ENCODE measurements at regions of chr1 and their contacts with region 1.

Region 1: GRCh38 chr1:168509875-168510791 is 33.7 kb downstream of the XCL2 start:
- DNase-seq: peak; percentile 84
- ATAC-seq: peak; percentile 71
- H3K4me3 Mint-ChIP-seq: peak overlapping the region; percentile 32
- H3K27ac Mint-ChIP-seq: peak overlapping the region; percentile 97
- H3K4me1 Mint-ChIP-seq: peaks cover 88% of the 10 kb centered on the region
- H3K27me3 Mint-ChIP-seq: no peaks in the 10 kb centered on the region
- CTCF ChIP-seq: no peak

Region 2: DNA sequence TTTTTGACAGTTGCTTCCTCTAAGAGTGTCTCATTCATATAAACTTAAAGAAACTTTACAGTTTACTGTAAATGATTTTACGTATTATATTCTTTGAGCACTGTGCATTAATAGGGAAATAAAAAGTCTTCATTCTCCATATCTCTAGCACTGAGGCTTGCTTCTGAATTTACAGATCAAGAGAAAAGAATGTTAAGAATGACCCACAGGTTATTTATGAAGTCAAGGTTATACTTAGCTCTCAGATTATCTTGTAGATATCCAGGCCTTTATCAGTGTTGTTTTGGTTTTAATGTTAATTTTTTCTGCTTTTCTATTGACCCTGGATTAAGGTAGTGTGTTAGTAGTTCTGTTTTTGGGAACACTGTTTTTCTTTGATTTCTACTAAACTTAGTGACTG is 464.8 kb before region 1 on chr1:
- CTCF ChIA-PET with region 1: no interaction called
- POLR2A ChIA-PET with region 1: no interaction called
- intact Hi-C with region 1: no loop called
- DNase-seq: no peak
- ATAC-seq: no peak
- H3K4me3 Mint-ChIP-seq: no peak overlapping the region
- H3K27ac Mint-ChIP-seq: no peak overlapping the region
- H3K4me1 Mint-ChIP-seq: no peaks in the 10 kb centered on the region
- H3K27me3 Mint-ChIP-seq: no peaks in the 10 kb centered on the region
- CTCF ChIP-seq: no peak

Region 3: GRCh38 chr1:168466092-168466713 is 43.9 kb before region 1 on chr1:
- CTCF ChIA-PET with region 1: no interaction called
- POLR2A ChIA-PET with region 1: interaction called, 5 read pairs
- intact Hi-C with region 1: loop called (anchors 5 kb)
- DNase-seq: peak; percentile 86
- ATAC-seq: peak; percentile 86
- H3K4me3 Mint-ChIP-seq: peak overlapping the region; percentile 22
- H3K27ac Mint-ChIP-seq: peak overlapping the region; percentile 91
- H3K4me1 Mint-ChIP-seq: peaks cover 57% of the 10 kb centered on the region
- H3K27me3 Mint-ChIP-seq: no peaks in the 10 kb centered on the region
- CTCF ChIP-seq: no peak

Region 4: GRCh38 chr1:168553680-168554553 is 43.8 kb after region 1 on chr1:
- CTCF ChIA-PET with region 1: interaction called, 3 read pairs
- POLR2A ChIA-PET with region 1: interaction called, 4 read pairs
- intact Hi-C with region 1: loop called (anchors 5 kb)
- DNase-seq: peak; percentile 75
- ATAC-seq: peak; percentile 68
- H3K4me3 Mint-ChIP-seq: peak overlapping the region; percentile 46
- H3K27ac Mint-ChIP-seq: peak overlapping the region; percentile 93
- H3K4me1 Mint-ChIP-seq: peaks cover 63% of the 10 kb centered on the region
- H3K27me3 Mint-ChIP-seq: no peaks in the 10 kb centered on the region
- CTCF ChIP-seq: no peak

Measured in activated CD8-positive, alpha-beta T cell treated with anti-CD3 and anti-CD28 coated beads for 36 hours (primary cell).